Left cardiac atrium (tissue), 4 donors: ENCODE measurements at regions of chrX and their contacts with region 1.

Region 1: DNA sequence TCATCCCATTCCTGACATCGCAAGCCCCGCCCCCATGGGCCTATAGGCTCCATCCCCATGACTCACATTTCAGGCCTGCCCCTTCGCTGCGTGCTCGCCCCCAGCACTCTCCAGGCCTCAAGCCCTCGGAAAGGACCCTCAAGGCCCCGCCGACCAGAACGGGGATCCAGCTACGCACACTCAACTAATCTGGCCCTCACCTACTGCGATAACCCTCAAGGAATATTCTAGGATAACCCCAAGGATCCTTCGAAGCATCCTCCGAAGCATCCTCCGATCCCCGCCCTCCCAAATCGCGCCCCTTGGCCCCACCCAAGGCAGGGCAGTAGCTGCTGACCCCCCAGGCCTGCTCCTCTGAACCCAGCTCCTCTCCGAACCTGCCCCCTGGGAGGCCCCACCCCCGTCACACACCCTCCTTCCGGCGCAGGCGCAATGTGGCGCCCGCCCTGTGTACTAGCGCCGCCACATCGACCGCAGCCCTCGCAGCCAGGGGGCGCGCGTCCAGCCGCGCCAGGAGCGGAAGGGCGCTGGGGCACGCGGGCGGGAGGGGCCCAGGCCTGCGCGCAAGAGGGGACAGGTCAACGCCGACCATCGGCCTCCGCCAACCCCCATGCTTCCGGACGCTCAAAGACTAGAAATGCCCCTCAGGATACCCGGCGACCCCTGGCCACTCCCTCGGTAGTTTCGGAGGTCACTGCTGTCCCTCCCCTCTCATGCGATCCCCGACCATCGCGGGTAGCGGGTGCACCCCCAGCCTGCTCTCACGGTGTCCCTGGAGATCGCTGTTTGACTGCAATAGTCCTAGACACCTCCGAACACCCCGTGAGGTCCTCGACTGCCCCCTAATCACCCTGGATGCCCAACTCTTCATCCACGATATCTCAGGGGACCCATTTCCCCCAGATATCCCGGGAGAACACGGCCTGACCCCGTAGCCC is 6.4 kb upstream of the MAGIX start:
- DNase-seq: peak; percentile 91
- ATAC-seq: peak; percentile 95 to 97

Region 2: GRCh38 chrX:49269768-49270248 is 113.6 kb after region 1 on chrX and contains the start of gene PPP1R3F:
- intact Hi-C with region 1: loop called in 1 of 2 experiments (anchors 10 kb)
- DNase-seq: no peak
- ATAC-seq: peak; percentile 15 to 38
- total RNA-seq, gene PPP1R3F: 17.5 to 22.5 TPM